GM12878 (cell line): ENCODE measurements at regions of chr9 and their contacts with region 1.

Region 1: DNA sequence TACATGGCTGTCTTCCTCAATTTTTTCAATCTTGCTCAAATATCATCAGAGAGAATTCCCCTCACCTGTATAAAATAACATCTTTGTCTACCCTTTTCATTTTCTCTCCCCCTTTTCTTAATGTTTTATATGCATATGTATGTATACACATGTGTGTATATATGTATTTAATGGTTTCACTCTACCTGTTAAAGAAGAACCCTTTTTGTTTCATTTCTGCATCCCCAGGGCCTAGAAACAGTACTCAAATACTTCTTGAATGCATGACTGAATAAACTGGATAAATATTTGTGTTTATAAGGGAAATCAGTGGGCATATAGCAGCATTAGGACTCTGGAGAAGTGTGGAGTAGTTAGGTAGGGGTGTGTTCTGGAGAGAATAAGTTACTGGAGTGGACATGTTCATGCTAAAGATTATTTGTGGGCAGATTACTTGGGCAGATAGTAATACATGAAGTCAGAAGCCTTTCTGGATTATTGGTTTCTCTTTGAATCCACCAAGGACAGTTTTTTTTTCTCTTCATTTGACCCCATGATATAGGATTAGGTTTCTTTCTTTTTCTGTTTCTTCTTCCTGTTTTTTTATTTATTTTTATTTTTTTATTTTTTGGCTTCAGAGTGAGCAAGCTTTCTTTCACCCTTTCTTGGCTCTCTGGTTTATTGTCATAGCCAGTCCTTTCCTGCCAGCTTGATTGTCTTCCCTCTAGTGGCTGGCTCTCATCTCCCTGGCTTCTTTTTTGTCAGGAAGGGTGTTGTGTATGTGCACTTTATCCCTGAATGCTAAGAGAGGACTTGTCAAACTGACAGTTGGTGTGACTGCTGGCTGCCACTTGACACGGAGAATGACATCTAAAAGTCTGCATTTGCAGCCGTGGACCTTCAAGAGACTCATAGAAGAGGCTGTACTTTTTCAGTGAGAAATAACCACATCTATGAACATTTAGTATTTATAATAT is 89.3 kb downstream of the ZCCHC7 start:
- DNase-seq: no peak
- ATAC-seq: peak; percentile 51
- H3K4me3 ChIP-seq: no peak overlapping the region
- H3K27ac ChIP-seq: peak overlapping the region; percentile 73
- H3K4me1 ChIP-seq: peaks cover 31% of the 10 kb centered on the region
- H3K27me3 ChIP-seq: no peaks in the 10 kb centered on the region
- CTCF ChIP-seq: peak in 2 of 3 experiments; percentile 16 to 21; a peak in 3 of 6 replicates
- EP300 ChIP-seq: no peak
- POLR2A ChIP-seq: no peak
- RAD21 ChIP-seq: peak; percentile 22; the same call in 1 of the 2 replicates

Region 2: DNA sequence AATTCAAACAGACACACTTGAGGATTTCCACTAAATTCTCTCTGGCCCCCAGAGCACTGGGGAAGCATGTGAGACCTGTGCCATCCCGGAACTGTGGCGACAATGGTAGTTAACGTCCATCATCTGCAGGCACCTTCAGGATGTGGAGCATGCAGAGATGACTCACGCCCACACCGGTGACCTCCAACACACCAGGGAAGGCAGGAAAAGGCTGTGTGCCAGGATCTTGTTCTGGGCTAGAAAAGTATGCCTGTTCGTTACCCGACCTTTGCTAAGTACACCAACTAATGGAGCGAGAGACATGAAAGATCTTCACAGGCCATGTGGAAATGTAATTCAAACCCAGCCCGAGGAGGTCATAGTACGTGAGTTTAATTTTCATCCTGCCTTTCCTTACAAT is 428.2 kb before region 1 on chr9:
- CTCF ChIA-PET with region 1: no interaction called
- POLR2A ChIA-PET with region 1: no interaction called
- RAD21 ChIA-PET with region 1: no interaction called
- SMC1A ChIA-PET with region 1: no interaction called
- in situ Hi-C with region 1: no loop called
- intact Hi-C with region 1: no loop called
- DNase-seq: no peak
- ATAC-seq: no peak
- H3K4me3 ChIP-seq: no peak overlapping the region
- H3K27ac ChIP-seq: no peak overlapping the region
- H3K4me1 ChIP-seq: no peaks in the 10 kb centered on the region
- H3K27me3 ChIP-seq: peaks cover 0 to 5% of the 10 kb centered on the region in 2 experiments; a peak in 2 of 4 replicates
- CTCF ChIP-seq: no peak
- EP300 ChIP-seq: no peak
- POLR2A ChIP-seq: no peak
- RAD21 ChIP-seq: no peak

Region 3: GRCh38 chr9:36928670-36929349 is 280.9 kb before region 1 on chr9:
- CTCF ChIA-PET with region 1: no interaction called
- POLR2A ChIA-PET with region 1: no interaction called
- RAD21 ChIA-PET with region 1: no interaction called
- SMC1A ChIA-PET with region 1: no interaction called
- in situ Hi-C with region 1: no loop called
- intact Hi-C with region 1: no loop called
- DNase-seq: peak; percentile 64
- ATAC-seq: peak; percentile 77
- H3K4me3 ChIP-seq: no peak overlapping the region
- H3K27ac ChIP-seq: peak overlapping the region; percentile 55
- H3K4me1 ChIP-seq: peaks cover 25% of the 10 kb centered on the region
- H3K27me3 ChIP-seq: no peaks in the 10 kb centered on the region
- CTCF ChIP-seq: no peak
- EP300 ChIP-seq: no peak
- POLR2A ChIP-seq: no peak
- RAD21 ChIP-seq: no peak

Region 4: GRCh38 chr9:37104183-37104889 is 105.4 kb before region 1 on chr9:
- CTCF ChIA-PET with region 1: no interaction called
- POLR2A ChIA-PET with region 1: no interaction called
- RAD21 ChIA-PET with region 1: no interaction called
- SMC1A ChIA-PET with region 1: no interaction called
- in situ Hi-C with region 1: no loop called
- intact Hi-C with region 1: no loop called
- DNase-seq: no peak
- ATAC-seq: peak; percentile 47; the same call in 2 of the 3 replicates
- H3K4me3 ChIP-seq: no peak overlapping the region
- H3K27ac ChIP-seq: no peak overlapping the region
- H3K4me1 ChIP-seq: peaks cover 3% of the 10 kb centered on the region; the same call in 1 of the 2 replicates
- H3K27me3 ChIP-seq: no peaks in the 10 kb centered on the region
- CTCF ChIP-seq: no peak
- EP300 ChIP-seq: no peak
- POLR2A ChIP-seq: no peak
- RAD21 ChIP-seq: no peak

Region 5: DNA sequence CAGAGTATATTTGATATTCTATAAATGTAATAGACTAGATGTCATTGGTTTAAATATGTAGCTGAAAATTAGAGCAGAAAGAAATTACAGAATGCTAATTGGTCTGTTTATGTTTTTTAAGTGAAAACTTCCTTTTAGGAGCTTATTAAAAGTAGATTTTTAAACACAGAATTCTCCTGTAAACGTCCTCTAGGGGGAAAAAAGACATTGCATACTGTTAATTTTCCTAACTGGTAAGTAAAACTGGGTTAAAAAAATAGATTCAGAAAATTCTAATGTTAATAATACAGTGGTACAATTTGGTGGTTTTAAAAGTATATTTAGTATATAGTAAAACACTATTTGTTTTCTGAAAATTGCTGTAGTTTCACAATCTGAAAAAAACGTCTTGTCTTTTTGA is 29.6 kb before region 1 on chr9:
- CTCF ChIA-PET with region 1: no interaction called
- POLR2A ChIA-PET with region 1: interaction called, 3 read pairs
- RAD21 ChIA-PET with region 1: no interaction called
- SMC1A ChIA-PET with region 1: interaction called, 10 read pairs
- in situ Hi-C with region 1: no loop called
- intact Hi-C with region 1: no loop called
- DNase-seq: no peak
- ATAC-seq: no peak
- H3K4me3 ChIP-seq: no peak overlapping the region
- H3K27ac ChIP-seq: no peak overlapping the region
- H3K4me1 ChIP-seq: no peaks in the 10 kb centered on the region; the same call in 1 of the 2 replicates
- H3K27me3 ChIP-seq: no peaks in the 10 kb centered on the region
- CTCF ChIP-seq: no peak
- EP300 ChIP-seq: no peak
- POLR2A ChIP-seq: no peak
- RAD21 ChIP-seq: no peak

Region 6: DNA sequence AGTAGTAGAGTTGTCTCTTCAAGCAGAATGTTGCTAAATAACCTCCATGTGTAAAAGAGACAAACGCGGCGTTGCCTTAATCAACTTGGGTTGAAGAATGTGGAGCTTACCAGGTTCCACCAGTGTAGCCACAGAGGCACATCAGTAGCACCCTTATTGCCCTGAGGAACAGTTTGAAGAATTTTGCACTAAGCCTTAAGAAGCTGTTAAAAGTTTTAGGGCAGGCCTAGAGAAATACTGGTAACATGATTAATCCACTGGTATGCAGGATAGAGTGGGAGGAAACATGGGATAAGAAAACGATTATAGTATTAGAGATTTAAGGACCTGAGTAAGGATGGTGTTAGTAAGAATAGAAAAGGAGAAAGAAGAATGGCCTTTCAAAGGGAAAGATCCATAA is 11.3 kb after region 1 on chr9:
- CTCF ChIA-PET with region 1: interaction called, 13 read pairs
- POLR2A ChIA-PET with region 1: interaction called, 14 read pairs
- RAD21 ChIA-PET with region 1: interaction called, 10 read pairs
- SMC1A ChIA-PET with region 1: interaction called, 85 read pairs
- in situ Hi-C with region 1: no loop called
- intact Hi-C with region 1: no loop called
- DNase-seq: no peak
- ATAC-seq: peak; percentile 47
- H3K4me3 ChIP-seq: no peak overlapping the region
- H3K27ac ChIP-seq: no peak overlapping the region
- H3K4me1 ChIP-seq: no peaks in the 10 kb centered on the region
- H3K27me3 ChIP-seq: no peaks in the 10 kb centered on the region
- CTCF ChIP-seq: no peak
- EP300 ChIP-seq: no peak
- POLR2A ChIP-seq: no peak
- RAD21 ChIP-seq: no peak

Region 7: GRCh38 chr9:37302277-37302676 is 92.6 kb after region 1 on chr9:
- CTCF ChIA-PET with region 1: interaction called, 6 read pairs
- POLR2A ChIA-PET with region 1: interaction called, 3 read pairs
- RAD21 ChIA-PET with region 1: interaction called, 13 read pairs
- SMC1A ChIA-PET with region 1: interaction called, 23 read pairs
- in situ Hi-C with region 1: no loop called
- intact Hi-C with region 1: no loop called
- DNase-seq: peak; percentile 90
- ATAC-seq: peak; percentile 91
- H3K4me3 ChIP-seq: peak overlapping the region; percentile 43; the same call in 1 of the 2 replicates
- H3K27ac ChIP-seq: peak overlapping the region; percentile 95
- H3K4me1 ChIP-seq: peaks cover 48% of the 10 kb centered on the region
- H3K27me3 ChIP-seq: no peaks in the 10 kb centered on the region
- CTCF ChIP-seq: no peak
- EP300 ChIP-seq: peak; percentile 82 to 93
- POLR2A ChIP-seq: no peak
- RAD21 ChIP-seq: peak; percentile 31; the same call in 1 of the 2 replicates